Common myeloid progenitor, CD34-positive (primary cell): ENCODE measurements at regions of chr22 and their contacts with region 1.

Region 1: GRCh38 chr22:17106785-17107546 is 14.2 kb downstream of the TMEM121B start:
- DNase-seq: peak; percentile 72 to 89 (median 89)
- H3K4me3 ChIP-seq: peak overlapping the region in 6 of 7 experiments; percentile 7 to 64 (median 46)
- H3K27ac ChIP-seq: no peak overlapping the region
- H3K4me1 ChIP-seq: peaks cover 15 to 75% (median 48%) of the 10 kb centered on the region in 4 experiments
- H3K27me3 ChIP-seq: peaks cover 0 to 5% (median 2%) of the 10 kb centered on the region in 5 experiments

Region 2: GRCh38 chr22:17087498-17088131 is 19.4 kb before region 1 on chr22:
- CTCF ChIA-PET with region 1: interaction called, 18 read pairs
- POLR2A ChIA-PET with region 1: interaction called, 3 read pairs
- DNase-seq: peak; percentile 68 to 93 (median 89)
- H3K4me3 ChIP-seq: peak overlapping the region in 6 of 7 experiments; percentile 6 to 84 (median 58)
- H3K27ac ChIP-seq: no peak overlapping the region
- H3K4me1 ChIP-seq: peaks cover 32 to 76% (median 49%) of the 10 kb centered on the region in 4 experiments
- H3K27me3 ChIP-seq: peaks cover 0 to 2% (median 0%) of the 10 kb centered on the region in 5 experiments

Region 3: DNA sequence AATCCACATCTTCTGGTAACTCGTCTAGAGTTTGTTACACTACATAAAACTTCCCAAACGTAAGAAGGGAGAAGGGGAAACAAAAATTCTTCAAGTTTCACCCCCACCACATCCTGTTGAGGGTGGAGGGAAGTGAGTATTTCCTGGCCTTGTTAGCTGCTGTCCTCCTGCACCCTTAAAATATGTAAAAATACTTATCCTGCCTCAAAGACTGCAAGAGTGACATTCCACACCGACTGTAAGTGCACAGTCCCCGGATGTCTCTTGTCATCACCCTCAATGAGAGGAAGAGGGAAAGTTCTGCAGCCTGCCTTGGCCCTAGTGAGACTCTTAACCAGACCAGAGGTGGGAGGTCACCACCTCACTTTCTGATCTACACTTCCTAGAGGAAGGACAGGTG is 10.9 kb after region 1 on chr22:
- CTCF ChIA-PET with region 1: interaction called, 11 read pairs
- POLR2A ChIA-PET with region 1: interaction called, 3 read pairs
- DNase-seq: peak in 2 of 3 donors; percentile 26 to 38
- H3K4me3 ChIP-seq: peak overlapping the region in 4 of 7 experiments; percentile 5 to 36 (median 22)
- H3K27ac ChIP-seq: no peak overlapping the region
- H3K4me1 ChIP-seq: peaks cover 33 to 84% (median 73%) of the 10 kb centered on the region in 4 experiments
- H3K27me3 ChIP-seq: peaks cover 0 to 41% (median 17%) of the 10 kb centered on the region in 5 experiments